MCF 10A (cell line): ENCODE measurements at regions of chr16 and their contacts with region 1.

Region 1: DNA sequence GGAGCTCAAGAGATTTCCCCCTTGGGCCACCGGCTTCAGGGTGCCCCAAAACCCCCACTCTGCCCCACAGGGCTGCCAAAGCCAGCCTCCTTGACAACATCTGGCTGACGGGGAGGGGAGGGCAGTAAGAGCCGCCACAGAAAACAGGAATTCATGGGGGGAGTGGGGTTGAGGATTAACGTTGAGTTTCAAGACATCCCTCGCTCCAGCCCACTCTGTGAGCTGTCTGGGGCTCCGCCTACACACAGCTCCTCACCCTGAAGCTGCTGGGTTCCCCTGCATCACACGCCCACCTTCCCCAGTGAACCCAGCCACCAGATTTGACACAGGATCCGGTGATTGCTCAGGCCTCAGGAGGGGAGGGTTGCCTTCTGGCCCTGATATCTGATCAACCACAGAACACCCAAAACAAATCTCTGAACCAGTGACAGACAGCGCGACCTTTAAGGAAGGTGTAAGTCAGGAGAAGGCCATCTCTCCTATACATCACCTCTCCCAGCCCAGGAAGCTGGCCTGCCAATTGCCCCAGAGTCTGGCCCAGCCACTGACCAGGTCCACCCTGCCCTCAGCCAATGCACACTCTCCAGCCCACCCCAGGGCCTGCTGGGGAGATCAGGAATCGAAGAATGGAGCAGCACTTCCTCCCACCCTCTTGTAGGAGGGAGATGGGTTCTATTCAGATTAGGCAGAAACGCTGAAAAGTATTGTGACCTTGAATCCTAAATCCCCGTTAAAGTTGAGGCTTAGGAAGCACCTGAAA is 132.1 kb downstream of the CLEC16A start:
- DNase-seq: no peak
- H3K4me3 Mint-ChIP-seq: no peak overlapping the region
- H3K27ac Mint-ChIP-seq: peak overlapping the region; percentile 95
- H3K4me1 Mint-ChIP-seq: peaks cover 27% of the 10 kb centered on the region
- H3K27me3 Mint-ChIP-seq: no peaks in the 10 kb centered on the region
- CTCF ChIP-seq: no peak

Region 2: GRCh38 chr16:10971560-10971961 is 104.9 kb before region 1 on chr16:
- CTCF ChIA-PET with region 1: no interaction called
- POLR2A ChIA-PET with region 1: no interaction called
- intact Hi-C with region 1: loop called (anchors 1 kb)
- DNase-seq: peak; percentile 69
- H3K4me3 Mint-ChIP-seq: no peak overlapping the region
- H3K27ac Mint-ChIP-seq: no peak overlapping the region
- H3K4me1 Mint-ChIP-seq: peaks cover 5% of the 10 kb centered on the region
- H3K27me3 Mint-ChIP-seq: no peaks in the 10 kb centered on the region
- CTCF ChIP-seq: peak; percentile 72

Region 3: GRCh38 chr16:10992797-10993196 is 83.6 kb before region 1 on chr16:
- CTCF ChIA-PET with region 1: no interaction called
- POLR2A ChIA-PET with region 1: no interaction called
- intact Hi-C with region 1: loop called (anchors 10 kb)
- DNase-seq: peak; percentile 89
- H3K4me3 Mint-ChIP-seq: peak overlapping the region; percentile 56
- H3K27ac Mint-ChIP-seq: peak overlapping the region; percentile 75
- H3K4me1 Mint-ChIP-seq: peaks cover 47% of the 10 kb centered on the region
- H3K27me3 Mint-ChIP-seq: no peaks in the 10 kb centered on the region
- CTCF ChIP-seq: no peak

Region 4: DNA sequence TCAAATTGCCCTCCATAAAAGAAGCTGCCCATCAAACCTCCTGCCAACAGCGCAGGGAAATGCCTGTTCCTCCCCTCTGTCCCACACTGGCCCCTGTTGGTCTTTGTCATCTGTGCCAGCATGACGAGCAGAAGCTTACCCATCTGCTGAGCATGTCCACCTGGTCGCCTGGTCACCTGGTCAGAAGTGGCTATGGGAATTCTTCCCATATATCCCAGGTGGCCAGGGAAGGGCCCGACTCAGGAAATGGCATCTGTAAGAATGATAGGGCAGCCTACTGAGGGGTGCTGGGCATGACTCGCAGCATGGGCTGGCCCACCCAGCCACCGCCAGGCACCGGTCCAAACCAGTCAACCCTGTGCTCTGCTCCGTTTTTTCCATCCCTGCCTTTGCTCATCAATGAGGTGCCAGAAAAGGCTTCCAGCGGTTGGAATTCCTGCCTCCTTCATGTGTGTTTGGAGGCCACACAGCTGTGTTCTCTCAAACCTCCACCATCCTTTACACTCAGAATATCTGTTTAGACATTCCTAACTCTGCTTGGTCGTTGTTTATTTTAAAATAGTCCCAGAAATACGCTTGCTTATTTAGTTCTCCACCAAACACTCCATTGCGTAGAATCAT is 13.2 kb after region 1 on chr16:
- CTCF ChIA-PET with region 1: no interaction called
- POLR2A ChIA-PET with region 1: no interaction called
- intact Hi-C with region 1: no loop called
- DNase-seq: no peak
- H3K4me3 Mint-ChIP-seq: no peak overlapping the region
- H3K27ac Mint-ChIP-seq: no peak overlapping the region
- H3K4me1 Mint-ChIP-seq: peaks cover 11% of the 10 kb centered on the region
- H3K27me3 Mint-ChIP-seq: no peaks in the 10 kb centered on the region
- CTCF ChIP-seq: no peak